ENCODE measurements at regions of chr6 and their contacts with region 1.

Region 1: GRCh38 chr6:100479179-100480035 is 14.7 kb upstream of the SIM1 start:
- DNase-seq: no peak
- ATAC-seq: peak in 3 of 4 donors; percentile 49 to 87 (median 69)
- H3K4me3 ChIP-seq: no peak overlapping the region
- H3K27ac ChIP-seq: no peak overlapping the region
- H3K4me1 ChIP-seq: no peaks in the 10 kb centered on the region
- H3K27me3 ChIP-seq: no peaks in the 10 kb centered on the region
- CTCF ChIP-seq: peak; percentile 80

Region 2: GRCh38 chr6:99868074-99868702 is 611.2 kb before region 1 on chr6:
- intact Hi-C with region 1: loop called in 1 of 2 experiments (anchors 5 kb)
- DNase-seq: peak; percentile 63 to 86
- ATAC-seq: peak; percentile 62 to 88 (median 70)
- H3K4me3 ChIP-seq: no peak overlapping the region
- H3K27ac ChIP-seq: no peak overlapping the region
- H3K4me1 ChIP-seq: no peaks in the 10 kb centered on the region
- H3K27me3 ChIP-seq: peaks cover 0 to 2% (median 0%) of the 10 kb centered on the region in 3 donors
- CTCF ChIP-seq: peak; percentile 85

Region 3: DNA sequence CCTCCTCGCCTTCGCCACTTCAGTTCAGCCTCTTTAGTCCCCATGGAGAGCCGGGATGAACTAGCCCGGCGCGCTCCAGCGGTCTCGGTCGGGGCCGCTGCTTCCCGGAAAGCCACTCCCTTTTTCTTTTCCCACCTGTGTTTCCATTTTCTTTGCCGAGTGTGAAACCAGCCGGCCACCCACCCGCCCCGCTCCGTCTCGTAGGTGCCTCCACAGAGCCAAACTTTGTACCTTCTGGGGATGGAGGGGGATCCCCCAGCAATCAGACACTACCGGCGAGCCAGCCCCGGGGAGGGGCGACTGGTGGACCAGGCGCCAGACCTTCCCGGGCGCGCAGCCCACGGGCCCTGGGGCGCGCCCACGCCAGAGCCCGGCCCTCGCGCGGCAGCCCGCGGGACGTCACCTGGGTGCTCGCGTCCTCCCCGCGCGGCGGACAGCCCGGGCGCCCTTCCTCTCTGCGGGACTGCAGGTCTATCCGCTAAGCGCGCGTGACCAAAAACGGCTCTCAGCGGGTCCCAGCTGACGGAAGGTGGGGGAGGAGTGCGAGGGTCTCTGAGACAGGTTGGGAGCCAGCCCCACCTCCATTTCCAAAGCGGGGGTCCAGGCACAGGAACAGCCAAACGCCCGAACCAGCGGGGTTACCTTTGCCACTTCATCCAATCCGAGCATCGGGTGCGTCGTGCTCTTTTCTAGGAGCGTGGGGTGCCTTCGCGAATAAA is 485.7 kb before region 1 on chr6 and contains the start of gene MCHR2:
- intact Hi-C with region 1: loop called in 1 of 2 experiments (anchors 10 kb)
- DNase-seq: no peak
- ATAC-seq: peak in 3 of 4 donors; percentile 30 to 69 (median 60)
- H3K4me3 ChIP-seq: peak within 1 kb of the TSS; percentile 47
- H3K27ac ChIP-seq: no peak within 1 kb of the TSS
- H3K4me1 ChIP-seq: no peaks in the 10 kb centered on the region
- H3K27me3 ChIP-seq: peaks cover 0 to 9% (median 8%) of the 10 kb centered on the region in 3 donors
- CTCF ChIP-seq: no peak
- total RNA-seq, gene MCHR2: not detected

Region 4: GRCh38 chr6:100116411-100117194 is 362.8 kb before region 1 on chr6:
- intact Hi-C with region 1: loop called (anchors 2 to 5 kb)
- DNase-seq: no peak
- ATAC-seq: peak in 3 of 4 donors; percentile 56 to 90 (median 59)
- H3K4me3 ChIP-seq: no peak overlapping the region
- H3K27ac ChIP-seq: no peak overlapping the region
- H3K4me1 ChIP-seq: no peaks in the 10 kb centered on the region
- H3K27me3 ChIP-seq: no peaks in the 10 kb centered on the region
- CTCF ChIP-seq: peak; percentile 77

Region 5: DNA sequence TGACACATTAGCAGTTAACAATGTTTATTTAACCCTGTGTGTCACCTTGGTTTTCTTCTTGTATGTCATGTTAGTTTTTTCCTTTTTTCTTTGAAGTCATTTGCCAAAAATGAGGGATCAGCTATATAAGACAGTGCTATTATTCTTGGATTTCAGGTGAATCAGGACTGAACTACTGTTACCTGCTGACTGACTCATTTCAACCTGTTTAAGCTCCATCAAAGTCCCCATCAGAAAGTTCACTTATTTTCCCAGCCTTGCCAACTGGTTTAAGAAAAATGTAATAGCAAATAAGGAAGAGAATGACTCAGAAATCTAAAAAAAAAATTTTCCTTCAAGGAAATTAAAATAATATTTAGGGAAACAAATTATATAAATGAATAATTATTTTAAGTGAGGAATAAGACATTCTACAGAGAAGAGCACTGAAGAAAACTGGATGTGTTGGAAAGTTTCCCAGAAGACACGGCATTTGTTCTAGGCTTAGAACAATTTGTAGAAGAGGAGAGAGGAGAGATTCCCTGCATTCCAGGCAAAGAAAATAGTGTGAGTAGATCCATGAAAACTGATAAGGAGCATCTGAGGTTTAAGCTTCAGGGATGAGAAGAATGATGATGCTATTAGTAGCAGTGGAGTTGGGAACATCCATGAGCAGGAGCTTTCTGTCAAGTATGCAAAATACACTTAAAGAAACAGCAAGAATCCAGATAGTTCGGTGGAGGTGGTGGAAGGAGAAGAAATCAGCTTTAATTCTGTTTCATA is 70.2 kb after region 1 on chr6:
- intact Hi-C with region 1: no loop called
- DNase-seq: no peak
- ATAC-seq: no peak
- H3K4me3 ChIP-seq: no peak overlapping the region
- H3K27ac ChIP-seq: no peak overlapping the region
- H3K4me1 ChIP-seq: no peaks in the 10 kb centered on the region
- H3K27me3 ChIP-seq: no peaks in the 10 kb centered on the region
- CTCF ChIP-seq: no peak

Region 6: GRCh38 chr6:100657678-100658330 is 178.4 kb after region 1 on chr6:
- intact Hi-C with region 1: loop called (anchors 10 kb)
- DNase-seq: no peak
- ATAC-seq: no peak
- H3K4me3 ChIP-seq: no peak overlapping the region
- H3K27ac ChIP-seq: no peak overlapping the region
- H3K4me1 ChIP-seq: no peaks in the 10 kb centered on the region
- H3K27me3 ChIP-seq: no peaks in the 10 kb centered on the region
- CTCF ChIP-seq: peak; percentile 56

Measured in psoas muscle (tissue), 8 donors.